GM10248 (cell line): ENCODE measurements at regions of chr6 and their contacts with region 1.

Region 1: DNA sequence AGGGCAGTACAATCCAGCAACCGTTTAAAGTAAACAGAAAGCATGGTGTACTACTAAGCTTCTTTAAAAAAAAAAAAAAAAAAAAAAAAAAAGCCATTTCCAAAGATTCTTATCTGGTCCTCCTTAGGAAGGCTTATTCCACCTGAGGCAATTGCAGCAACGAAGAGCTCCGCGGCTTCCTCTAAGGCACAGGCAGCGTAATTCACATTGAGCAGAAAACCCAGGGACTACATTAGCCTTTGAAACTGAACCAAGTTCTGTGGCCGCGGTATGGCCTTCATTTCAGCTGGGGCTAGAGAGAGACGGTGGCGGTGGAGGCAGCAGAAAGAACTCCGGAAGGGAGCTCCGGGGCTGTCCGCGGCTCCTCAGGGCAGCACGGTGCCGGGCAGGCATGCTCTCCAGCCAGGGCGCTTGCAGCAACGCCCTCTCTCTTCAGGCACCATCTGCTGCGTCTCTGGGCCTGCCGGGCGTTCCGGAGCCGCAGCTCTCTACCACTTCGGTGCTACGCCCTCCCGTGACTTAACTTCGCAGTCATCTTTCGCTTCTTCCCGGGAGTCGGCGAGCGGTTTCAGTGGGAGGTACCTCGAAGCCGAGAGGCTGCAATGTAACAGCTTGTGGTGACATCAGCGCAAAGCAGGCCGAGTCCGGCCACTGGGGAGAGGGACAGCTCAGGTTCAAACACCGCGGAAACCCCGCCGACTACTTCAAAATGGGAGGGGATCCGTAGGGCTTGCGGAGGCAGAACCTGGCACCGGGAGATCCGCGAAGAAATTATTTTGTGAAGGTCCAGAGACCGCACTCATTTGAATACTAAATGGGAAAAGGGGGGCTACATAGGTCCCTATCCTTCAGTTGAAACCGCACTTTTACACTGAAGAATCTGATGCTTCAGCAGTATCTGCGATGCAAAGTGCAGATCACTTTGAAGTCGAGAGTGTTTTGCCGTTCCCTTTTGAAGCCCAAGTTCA is 100.0 kb downstream of the DST start:
- DNase-seq: peak; percentile 84
- CTCF ChIP-seq: peak; percentile 25

Region 2: DNA sequence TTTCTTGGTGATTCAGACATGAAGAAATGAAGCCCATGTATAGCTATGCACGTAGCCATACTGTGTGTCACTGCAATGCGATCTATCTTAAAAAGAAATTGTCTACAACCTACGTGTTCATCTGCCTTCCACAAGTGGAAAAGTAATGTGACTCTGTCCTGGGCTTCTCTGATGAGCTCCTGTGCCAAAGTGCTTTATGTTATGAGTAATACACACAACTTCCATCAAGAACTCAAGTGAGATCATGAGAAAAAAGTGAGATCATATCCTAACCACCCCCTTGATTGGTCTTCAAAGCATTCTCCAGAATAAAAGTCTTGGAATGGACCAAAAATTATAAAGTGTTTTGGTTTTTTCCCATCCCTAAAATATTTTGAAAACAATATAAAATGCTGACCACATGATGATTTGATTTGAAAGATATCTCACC is 14.2 kb before region 1 on chr6:
- CTCF ChIA-PET with region 1: interaction called, 23 read pairs
- POLR2A ChIA-PET with region 1: interaction called, 3 read pairs
- DNase-seq: no peak
- CTCF ChIP-seq: no peak

Region 3: DNA sequence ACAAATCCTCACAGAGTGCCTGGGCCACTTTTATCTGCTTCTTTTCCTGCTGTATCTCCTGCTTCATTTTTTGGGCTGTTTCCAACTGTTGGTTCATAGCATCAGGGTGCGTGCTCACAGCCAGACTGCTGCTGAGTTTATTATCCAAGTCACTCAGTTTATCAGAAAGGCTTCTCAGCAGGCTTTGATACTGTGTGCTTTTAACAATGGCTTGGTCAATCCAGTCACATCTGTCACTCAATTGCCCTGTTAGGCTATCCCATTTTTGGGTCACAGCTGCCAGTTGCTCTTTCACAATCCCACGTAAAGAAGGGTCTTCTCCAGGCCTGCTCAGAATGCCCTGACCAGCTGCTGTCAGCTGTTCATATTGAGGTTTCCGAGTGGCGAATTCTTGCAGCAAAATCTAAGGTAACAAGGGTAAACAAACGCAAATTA is 12.8 kb after region 1 on chr6:
- CTCF ChIA-PET with region 1: interaction called, 15 read pairs
- POLR2A ChIA-PET with region 1: no interaction called
- DNase-seq: no peak
- CTCF ChIP-seq: no peak

Region 4: GRCh38 chr6:56604186-56604585 is 61.5 kb after region 1 on chr6:
- CTCF ChIA-PET with region 1: no interaction called
- POLR2A ChIA-PET with region 1: interaction called, 10 read pairs
- DNase-seq: no peak
- CTCF ChIP-seq: no peak